ENCODE measurements at regions of chr19 and their contacts with region 1.

Region 1: DNA sequence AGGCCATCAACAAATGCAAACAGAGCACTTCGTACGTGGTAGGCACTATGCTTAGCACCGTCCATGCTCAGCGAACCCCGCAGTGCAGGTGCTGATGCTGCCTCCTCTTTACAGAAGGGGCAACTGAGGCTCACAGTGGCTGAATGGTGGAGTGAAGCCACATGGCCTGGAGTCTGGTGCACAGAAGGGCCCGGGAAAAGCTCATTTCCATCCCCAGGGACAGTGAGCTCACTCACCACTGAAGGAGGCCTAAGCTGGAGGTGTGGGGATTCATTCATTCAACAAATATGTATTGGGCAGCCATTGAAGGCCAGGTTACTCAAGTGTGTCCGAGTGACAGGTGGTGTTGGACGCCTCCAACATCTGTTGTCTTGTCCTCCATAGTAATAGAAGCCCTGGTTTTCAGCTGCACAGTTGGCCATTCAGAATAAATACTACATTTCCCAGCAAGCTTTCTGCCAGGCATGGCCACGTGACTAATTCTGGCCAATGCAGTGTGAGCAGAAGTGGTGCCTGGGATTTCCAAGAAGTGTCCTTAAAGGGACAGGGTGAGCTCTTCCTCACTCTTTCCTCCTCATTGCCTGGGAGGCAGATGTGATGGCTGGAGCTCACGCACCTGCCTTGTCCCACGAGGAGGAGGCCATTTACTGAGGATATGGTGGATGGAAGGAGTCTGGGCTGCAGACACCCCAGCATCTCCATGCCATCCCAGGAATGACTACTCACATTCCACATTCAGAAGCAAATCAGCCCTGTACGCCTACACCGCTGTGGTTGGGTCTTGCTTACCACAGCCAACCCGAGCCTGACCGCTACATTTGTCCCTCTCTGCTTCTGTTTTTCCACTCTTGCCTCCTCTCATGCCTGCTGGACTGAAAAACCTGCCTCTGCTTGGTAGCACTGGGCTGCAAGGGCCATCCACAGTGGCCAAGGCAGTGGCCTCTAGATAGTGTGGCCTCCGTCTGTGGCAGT is 2.3 kb upstream of the ZNRF4 start:
- DNase-seq: peak; percentile 30
- H3K4me3 ChIP-seq: no peak overlapping the region
- H3K27ac ChIP-seq: no peak overlapping the region
- H3K4me1 ChIP-seq: no peaks in the 10 kb centered on the region
- H3K27me3 ChIP-seq: no peaks in the 10 kb centered on the region
- CTCF ChIP-seq: no peak

Region 2: GRCh38 chr19:5138606-5139582 is 314.0 kb before region 1 on chr19:
- CTCF ChIA-PET with region 1: no interaction called
- POLR2A ChIA-PET with region 1: no interaction called
- intact Hi-C with region 1: no loop called
- DNase-seq: peak; percentile 77
- H3K4me3 ChIP-seq: no peak overlapping the region
- H3K27ac ChIP-seq: peak overlapping the region; percentile 37
- H3K4me1 ChIP-seq: peaks cover 7% of the 10 kb centered on the region
- H3K27me3 ChIP-seq: no peaks in the 10 kb centered on the region
- CTCF ChIP-seq: 0 out of 2 replicates have a peak, but pooled peaks have one; percentile 13

Region 3: GRCh38 chr19:5397804-5398692 is 54.8 kb before region 1 on chr19:
- CTCF ChIA-PET with region 1: no interaction called
- POLR2A ChIA-PET with region 1: no interaction called
- intact Hi-C with region 1: no loop called
- DNase-seq: peak; percentile 49
- H3K4me3 ChIP-seq: no peak overlapping the region
- H3K27ac ChIP-seq: no peak overlapping the region
- H3K4me1 ChIP-seq: no peaks in the 10 kb centered on the region
- H3K27me3 ChIP-seq: peaks cover 49% of the 10 kb centered on the region
- CTCF ChIP-seq: no peak

Region 4: GRCh38 chr19:5466814-5467291 is 14.0 kb after region 1 on chr19:
- CTCF ChIA-PET with region 1: interaction called, 4 read pairs
- POLR2A ChIA-PET with region 1: interaction called, 26 read pairs
- intact Hi-C with region 1: no loop called
- DNase-seq: peak; percentile 73
- H3K4me3 ChIP-seq: no peak overlapping the region
- H3K27ac ChIP-seq: no peak overlapping the region
- H3K4me1 ChIP-seq: peaks cover 16% of the 10 kb centered on the region
- H3K27me3 ChIP-seq: no peaks in the 10 kb centered on the region
- CTCF ChIP-seq: no peak

Region 5: GRCh38 chr19:6161271-6161850 is 708.5 kb after region 1 on chr19:
- CTCF ChIA-PET with region 1: no interaction called
- POLR2A ChIA-PET with region 1: no interaction called
- intact Hi-C with region 1: no loop called
- DNase-seq: peak; percentile 83
- H3K4me3 ChIP-seq: no peak overlapping the region
- H3K27ac ChIP-seq: no peak overlapping the region
- H3K4me1 ChIP-seq: no peaks in the 10 kb centered on the region
- H3K27me3 ChIP-seq: no peaks in the 10 kb centered on the region
- CTCF ChIP-seq: no peak

Region 6: GRCh38 chr19:7004313-7004931 is 1551.5 kb after region 1 on chr19:
- CTCF ChIA-PET with region 1: no interaction called
- POLR2A ChIA-PET with region 1: no interaction called
- intact Hi-C with region 1: no loop called
- DNase-seq: peak; percentile 54
- H3K4me3 ChIP-seq: no peak overlapping the region
- H3K27ac ChIP-seq: no peak overlapping the region
- H3K4me1 ChIP-seq: no peaks in the 10 kb centered on the region
- H3K27me3 ChIP-seq: no peaks in the 10 kb centered on the region
- CTCF ChIP-seq: peak; percentile 67

Measured in A673 (cell line).